Right ventricle myocardium inferior (tissue), 1 donor: ENCODE measurements at regions of chr1 and their contacts with region 1.

Region 1: GRCh38 chr1:100538913-100539835 is 1.2 kb downstream of the GPR88 start:
- DNase-seq: peak; percentile 81
- ATAC-seq: peak; percentile 57

Region 2: GRCh38 chr1:100575406-100575805 is 36.2 kb after region 1 on chr1:
- intact Hi-C with region 1: loop called (anchors 5 kb)
- DNase-seq: no peak
- ATAC-seq: no peak

Region 3: GRCh38 chr1:100613817-100614559 is 74.8 kb after region 1 on chr1:
- intact Hi-C with region 1: no loop called
- DNase-seq: no peak
- ATAC-seq: no peak